ENCODE measurements at regions of chr11 and their contacts with region 1.

Region 1: DNA sequence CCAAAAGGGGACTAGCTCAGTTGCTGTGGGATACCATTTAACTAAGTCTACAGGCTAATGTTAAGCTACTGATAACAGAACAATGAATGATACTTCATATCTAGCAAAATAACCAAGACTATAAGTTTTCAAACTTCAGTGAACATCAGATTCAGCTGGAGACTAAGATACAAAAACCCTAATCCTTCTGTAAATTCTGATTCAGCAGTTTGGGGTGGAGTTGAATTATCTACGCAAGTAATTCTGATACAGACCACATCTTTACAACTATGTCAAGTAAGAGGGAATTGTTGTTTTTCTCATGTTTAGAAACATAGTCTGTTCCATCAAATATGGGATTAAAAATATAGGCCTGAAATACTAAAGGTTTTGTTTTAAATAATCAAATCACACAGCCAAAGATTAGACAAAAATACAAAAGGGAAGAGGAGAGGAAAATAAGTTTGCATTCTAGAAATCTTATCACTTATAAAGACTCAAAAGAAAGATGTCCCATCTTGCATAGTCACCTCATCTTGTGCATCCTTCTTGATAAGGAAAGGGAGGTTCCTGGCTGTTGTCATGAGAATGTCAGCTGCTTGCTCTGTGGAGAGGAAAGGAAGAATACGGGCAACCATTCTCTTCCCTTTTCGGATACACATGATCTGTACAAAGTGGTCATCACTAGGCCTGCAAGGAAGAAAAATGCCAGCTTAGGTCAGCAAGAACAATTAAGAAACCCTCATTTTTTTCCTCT is 21.4 kb downstream of the PATL1 start:
- DNase-seq: no peak
- ATAC-seq: no peak
- H3K4me3 ChIP-seq: no peak overlapping the region
- H3K27ac ChIP-seq: no peak overlapping the region
- H3K4me1 ChIP-seq: no peaks in the 10 kb centered on the region
- H3K27me3 ChIP-seq: no peaks in the 10 kb centered on the region
- CTCF ChIP-seq: no peak
- POLR2A ChIP-seq: no peak
- RAD21 ChIP-seq: no peak

Region 2: DNA sequence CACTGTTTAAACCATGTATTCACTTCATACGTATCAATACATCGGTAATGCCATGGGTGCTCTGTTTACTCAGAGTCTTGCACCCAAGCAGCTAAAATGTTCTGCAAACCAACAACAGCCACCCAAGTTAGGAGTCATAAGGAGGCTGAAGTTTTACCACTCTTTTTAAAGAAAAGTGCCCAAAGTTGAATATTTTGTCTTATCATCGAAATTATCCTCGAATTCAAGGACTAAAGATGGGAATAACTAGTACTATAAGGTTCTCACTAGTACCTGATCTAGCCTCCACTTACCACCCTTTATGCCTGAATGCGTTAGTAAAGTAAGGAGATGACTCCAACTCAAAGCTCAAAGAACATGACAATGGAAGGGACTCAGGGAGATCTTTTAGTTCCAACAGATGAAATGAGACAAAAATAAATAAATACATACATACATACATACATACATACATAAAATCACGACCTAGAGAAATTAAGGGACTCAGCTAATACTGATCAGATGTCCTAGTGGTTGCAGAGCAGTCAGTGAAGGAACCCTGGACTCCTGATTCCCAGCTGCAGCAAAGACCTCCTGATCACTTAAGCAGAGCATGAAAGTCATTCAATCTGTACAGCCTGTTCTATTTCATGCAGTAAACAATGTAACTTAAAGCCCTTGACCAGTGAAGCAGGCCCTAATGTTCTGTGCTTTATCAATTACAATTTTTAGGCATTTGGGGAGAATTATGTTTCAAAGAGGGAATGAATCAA is 39.5 kb before region 1 on chr11:
- CTCF ChIA-PET with region 1: no interaction called
- POLR2A ChIA-PET with region 1: no interaction called
- dilution Hi-C with region 1: no loop called
- in situ Hi-C with region 1: loop called (anchors 5 kb)
- intact Hi-C with region 1: loop called (anchors 2 kb)
- DNase-seq: no peak
- ATAC-seq: no peak
- H3K4me3 ChIP-seq: no peak overlapping the region
- H3K27ac ChIP-seq: no peak overlapping the region
- H3K4me1 ChIP-seq: peaks cover 4% of the 10 kb centered on the region
- H3K27me3 ChIP-seq: no peaks in the 10 kb centered on the region
- CTCF ChIP-seq: no peak
- POLR2A ChIP-seq: no peak
- RAD21 ChIP-seq: no peak

Region 3: GRCh38 chr11:59706518-59707285 is 59.3 kb after region 1 on chr11:
- CTCF ChIA-PET with region 1: no interaction called
- POLR2A ChIA-PET with region 1: no interaction called
- dilution Hi-C with region 1: no loop called
- in situ Hi-C with region 1: no loop called
- intact Hi-C with region 1: no loop called
- DNase-seq: peak; percentile 88
- ATAC-seq: peak; percentile 79
- H3K4me3 ChIP-seq: no peak overlapping the region
- H3K27ac ChIP-seq: no peak overlapping the region
- H3K4me1 ChIP-seq: peaks cover 9% of the 10 kb centered on the region; the same call in 1 of the 2 replicates
- H3K27me3 ChIP-seq: no peaks in the 10 kb centered on the region
- CTCF ChIP-seq: no peak
- POLR2A ChIP-seq: no peak
- RAD21 ChIP-seq: no peak

Measured in IMR-90 (cell line).